ENCODE measurements at regions of chr1 and their contacts with region 1.

Region 1: DNA sequence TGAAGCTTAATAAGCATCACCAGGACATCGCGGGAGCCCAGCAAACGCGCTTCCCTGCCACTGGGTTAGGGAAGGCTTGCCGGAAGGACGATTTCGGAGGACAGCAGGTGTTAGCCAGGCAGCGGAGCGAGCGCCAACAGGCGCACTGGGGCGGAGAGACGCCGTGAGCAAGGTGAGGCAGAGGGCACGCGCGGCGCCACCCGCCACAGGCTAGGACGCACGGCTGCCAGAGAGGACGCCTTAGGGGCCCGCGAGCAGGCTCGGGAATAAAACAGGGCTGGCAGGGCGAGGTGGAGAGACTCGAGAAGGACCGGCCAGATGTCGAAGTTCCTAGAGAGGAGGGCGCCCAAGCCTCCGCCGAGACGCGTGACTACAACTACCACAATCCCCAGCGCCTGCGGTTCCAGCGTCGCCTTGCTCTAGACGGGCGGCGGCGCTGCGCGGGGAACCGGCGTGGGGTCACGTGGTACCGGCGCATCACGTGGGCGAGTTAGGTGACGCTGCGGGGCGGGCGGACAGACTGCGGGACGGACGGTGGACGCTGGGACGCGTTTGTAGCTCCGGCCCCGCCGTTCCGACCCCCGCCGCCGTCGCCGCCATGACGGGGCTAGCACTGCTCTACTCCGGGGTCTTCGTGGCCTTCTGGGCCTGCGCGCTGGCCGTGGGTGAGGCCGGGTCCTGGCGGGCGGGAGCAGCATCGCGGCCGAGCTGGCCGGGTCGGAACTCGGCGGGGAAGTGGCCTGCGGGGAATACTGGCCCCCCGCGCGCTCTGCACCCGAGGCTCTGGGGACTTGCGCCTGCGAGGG is at the start of gene ATP6V0B:
- DNase-seq: peak; percentile 89
- ATAC-seq: peak; percentile 73
- H3K4me3 ChIP-seq: peak within 1 kb of the TSS; percentile 76
- H3K27ac ChIP-seq: peak within 1 kb of the TSS; percentile 73
- H3K4me1 ChIP-seq: peaks cover 12% of the 10 kb centered on the region
- H3K27me3 ChIP-seq: no peaks in the 10 kb centered on the region
- CTCF ChIP-seq: peak; percentile 23; the same call in 1 of the 2 replicates
- POLR2A ChIP-seq: peak; percentile 77
- RAD21 ChIP-seq: no peak
- total RNA-seq, gene ATP6V0B: 72.1 and 80.3 TPM in 2 replicates

Region 2: GRCh38 chr1:43706598-43707495 is 267.8 kb before region 1 on chr1:
- CTCF ChIA-PET with region 1: no interaction called
- POLR2A ChIA-PET with region 1: no interaction called
- dilution Hi-C with region 1: no loop called
- in situ Hi-C with region 1: no loop called
- intact Hi-C with region 1: loop called (anchors 1 kb)
- DNase-seq: peak; percentile 90
- ATAC-seq: peak; percentile 89
- H3K4me3 ChIP-seq: peak overlapping the region; percentile 84
- H3K27ac ChIP-seq: peak overlapping the region; percentile 63
- H3K4me1 ChIP-seq: peaks cover 11% of the 10 kb centered on the region
- H3K27me3 ChIP-seq: no peaks in the 10 kb centered on the region
- CTCF ChIP-seq: no peak
- POLR2A ChIP-seq: peak; percentile 62; the same call in 1 of the 2 replicates
- RAD21 ChIP-seq: no peak

Region 3: GRCh38 chr1:43946236-43947060 is 28.2 kb before region 1 on chr1 and contains the start of gene IPO13:
- CTCF ChIA-PET with region 1: interaction called, 4 read pairs
- POLR2A ChIA-PET with region 1: no interaction called
- dilution Hi-C with region 1: no loop called
- in situ Hi-C with region 1: no loop called
- intact Hi-C with region 1: loop called (anchors 2 kb)
- DNase-seq: peak; percentile 94
- ATAC-seq: peak; percentile 97
- H3K4me3 ChIP-seq: peak within 1 kb of the TSS; percentile 67
- H3K27ac ChIP-seq: peak within 1 kb of the TSS; percentile 97
- H3K4me1 ChIP-seq: peaks cover 15% of the 10 kb centered on the region
- H3K27me3 ChIP-seq: no peaks in the 10 kb centered on the region
- CTCF ChIP-seq: peak; percentile 66
- POLR2A ChIP-seq: peak; percentile 72
- RAD21 ChIP-seq: peak; percentile 59
- total RNA-seq, gene IPO13: 14.2 and 15.2 TPM in 2 replicates

Region 4: GRCh38 chr1:44154047-44154446 is 179.4 kb after region 1 on chr1:
- CTCF ChIA-PET with region 1: no interaction called
- POLR2A ChIA-PET with region 1: no interaction called
- dilution Hi-C with region 1: no loop called
- in situ Hi-C with region 1: no loop called
- intact Hi-C with region 1: no loop called
- DNase-seq: no peak
- ATAC-seq: no peak
- H3K4me3 ChIP-seq: no peak overlapping the region
- H3K27ac ChIP-seq: no peak overlapping the region
- H3K4me1 ChIP-seq: no peaks in the 10 kb centered on the region
- H3K27me3 ChIP-seq: peaks cover 5% of the 10 kb centered on the region
- CTCF ChIP-seq: no peak
- POLR2A ChIP-seq: no peak
- RAD21 ChIP-seq: no peak

Measured in IMR-90 (cell line).